GM18951 (cell line): ENCODE measurements at regions of chr14 and their contacts with region 1.

Region 1: GRCh38 chr14:71749613-71750238 is 182.5 kb upstream of the RGS6 start:
- POLR2A ChIP-seq: no peak

Region 2: GRCh38 chr14:71138448-71139293 is 611.1 kb before region 1 on chr14:
- in situ Hi-C with region 1: loop called (anchors 10 kb)
- POLR2A ChIP-seq: no peak

Region 3: DNA sequence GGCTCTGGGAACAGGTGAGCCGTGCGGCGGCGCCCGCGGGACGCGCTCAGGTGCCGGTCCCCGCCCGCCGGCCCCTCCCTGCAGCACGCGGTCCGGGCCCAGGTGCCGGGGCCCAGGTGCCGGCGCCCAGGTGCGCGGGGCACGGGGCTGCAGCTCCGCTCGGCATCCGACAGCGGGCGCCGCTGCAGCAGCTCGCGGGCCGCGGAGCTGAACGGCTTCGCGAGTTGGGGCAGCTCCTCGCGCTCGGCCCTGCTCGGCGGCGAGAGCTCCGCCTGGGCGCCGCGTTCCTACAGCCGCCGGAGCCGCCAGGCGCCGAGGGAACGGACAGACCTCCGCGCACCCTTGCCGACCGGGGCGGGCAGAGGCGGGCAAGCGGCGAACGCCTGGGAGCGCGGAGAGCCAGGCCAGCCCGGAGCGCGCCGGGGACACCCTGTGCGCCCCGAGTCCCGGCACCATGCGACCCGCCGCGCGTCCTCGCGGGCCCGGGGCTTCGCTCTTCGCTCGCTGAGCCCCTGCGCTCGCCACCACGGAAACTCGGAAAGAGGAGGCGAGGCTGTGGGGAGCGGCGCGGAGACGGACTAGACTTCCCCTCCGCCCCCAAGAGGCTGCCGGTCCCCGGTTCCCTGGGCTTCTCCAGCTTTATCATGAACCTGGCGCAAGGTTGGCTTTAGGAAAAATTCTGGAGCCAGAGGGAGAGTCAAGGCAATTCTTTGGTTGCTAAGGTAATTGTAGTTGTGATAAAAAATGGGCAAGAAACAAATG is 182.7 kb after region 1 on chr14 and contains the start of gene RGS6:
- in situ Hi-C with region 1: no loop called
- POLR2A ChIP-seq: no peak

Region 4: DNA sequence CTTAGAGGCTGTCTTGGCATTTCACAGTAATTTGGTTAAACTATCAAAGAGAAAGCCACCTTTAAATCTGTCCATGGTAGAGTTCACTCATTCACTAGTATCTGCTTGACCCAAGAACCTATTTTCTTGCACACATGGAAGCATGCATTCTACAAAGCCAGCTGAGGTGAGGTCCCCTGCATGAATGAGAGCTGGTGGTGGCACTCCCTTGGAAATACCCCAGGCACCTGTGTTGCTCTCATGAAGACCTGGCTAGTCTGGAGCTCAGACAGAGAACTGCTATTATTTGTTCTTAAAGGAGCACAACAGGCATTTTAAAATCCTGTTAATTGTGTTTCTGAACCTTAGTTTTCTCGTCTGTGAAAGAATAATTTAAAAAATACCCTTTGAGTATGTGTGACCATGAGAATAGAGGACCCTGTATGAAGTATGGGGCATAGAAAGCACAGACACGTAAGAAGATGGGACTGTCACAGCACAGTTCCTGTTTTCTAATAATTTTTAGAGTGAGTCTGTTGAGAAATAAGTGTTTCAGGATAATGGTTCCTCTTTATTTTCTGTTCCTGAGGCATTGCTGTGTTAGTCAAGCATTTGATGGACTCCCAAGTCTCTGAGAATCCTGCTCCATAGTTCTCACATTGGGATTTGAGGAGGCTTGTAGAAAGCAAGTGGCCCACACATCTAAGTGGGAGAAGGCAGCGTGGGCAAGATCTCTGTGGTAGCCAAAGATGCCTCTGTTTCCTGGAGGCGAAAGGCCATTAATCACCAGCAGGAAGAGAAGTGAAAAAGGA is 193.4 kb after region 1 on chr14:
- in situ Hi-C with region 1: no loop called
- POLR2A ChIP-seq: no peak